HEK293T (cell line): ENCODE measurements at regions of chr1 and their contacts with region 1.

Region 1: GRCh38 chr1:109984456-109985275 is at the start of gene AHCYL1:
- DNase-seq: peak; percentile 100

Region 2: DNA sequence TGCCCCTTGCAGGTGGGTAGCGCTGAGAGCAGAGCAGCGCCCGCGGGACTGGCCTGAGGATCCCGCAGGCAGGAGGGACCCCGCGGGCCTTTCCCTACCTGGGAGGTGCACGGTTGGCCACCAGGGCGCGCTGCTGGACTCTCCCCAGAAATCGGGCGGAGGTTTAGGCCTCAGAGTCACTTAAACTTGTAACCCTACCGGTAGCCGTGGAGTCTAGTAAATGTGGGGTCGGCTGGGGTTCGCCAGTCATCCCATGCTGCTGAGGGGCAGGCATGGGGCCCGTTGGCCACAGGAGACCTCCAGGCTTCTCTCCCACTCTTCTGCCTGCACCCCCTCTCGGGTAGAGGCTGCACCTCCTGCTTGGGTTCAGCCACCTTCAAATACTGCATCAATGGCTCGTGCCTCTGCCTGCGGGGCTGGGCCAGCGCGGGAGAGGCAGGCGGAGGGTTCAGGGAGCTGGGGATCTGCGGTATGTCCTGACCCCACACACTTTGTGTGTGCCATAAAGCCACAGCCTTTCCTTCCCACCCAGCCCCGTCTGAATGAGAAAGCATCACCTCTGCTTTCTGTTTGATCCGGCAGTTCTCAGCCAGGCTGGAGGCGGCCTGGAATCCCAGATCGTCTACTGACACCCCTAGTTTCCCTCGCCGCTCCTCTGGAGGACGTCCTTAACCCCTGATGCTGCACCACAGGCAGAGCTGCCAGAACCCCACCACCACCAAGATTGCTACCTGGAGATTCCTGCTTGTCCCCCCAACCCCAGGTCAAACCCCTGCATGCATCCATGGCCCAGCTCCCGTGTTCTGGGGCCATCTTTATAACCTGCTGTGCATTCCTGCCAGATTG is 341.1 kb before region 1 on chr1:
- CTCF ChIA-PET with region 1: interaction called, 25 read pairs
- POLR2A ChIA-PET with region 1: no interaction called
- DNase-seq: peak; percentile 91

Region 3: DNA sequence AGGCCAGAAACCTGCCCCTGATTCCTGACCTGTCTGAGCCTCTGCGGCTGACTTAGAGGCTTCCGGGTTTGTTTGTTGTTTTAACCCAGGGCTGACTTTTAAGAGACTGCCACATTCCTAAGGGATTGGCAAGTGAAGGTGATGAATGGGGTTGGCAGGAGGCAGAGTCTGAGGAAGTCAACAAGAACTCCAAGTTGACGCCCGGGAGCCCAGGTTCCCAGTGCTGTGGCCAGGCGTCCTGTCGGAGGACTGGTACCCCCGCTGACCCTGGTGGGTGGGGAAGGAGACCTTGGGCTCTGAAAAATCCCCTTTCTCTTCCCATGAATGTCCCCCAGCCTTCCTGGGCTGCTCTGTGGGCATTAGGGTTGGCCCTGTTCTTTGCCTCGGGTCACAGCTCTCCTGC is 201.2 kb before region 1 on chr1:
- CTCF ChIA-PET with region 1: interaction called, 139 read pairs
- POLR2A ChIA-PET with region 1: interaction called, 39 read pairs
- DNase-seq: no peak

Region 4: DNA sequence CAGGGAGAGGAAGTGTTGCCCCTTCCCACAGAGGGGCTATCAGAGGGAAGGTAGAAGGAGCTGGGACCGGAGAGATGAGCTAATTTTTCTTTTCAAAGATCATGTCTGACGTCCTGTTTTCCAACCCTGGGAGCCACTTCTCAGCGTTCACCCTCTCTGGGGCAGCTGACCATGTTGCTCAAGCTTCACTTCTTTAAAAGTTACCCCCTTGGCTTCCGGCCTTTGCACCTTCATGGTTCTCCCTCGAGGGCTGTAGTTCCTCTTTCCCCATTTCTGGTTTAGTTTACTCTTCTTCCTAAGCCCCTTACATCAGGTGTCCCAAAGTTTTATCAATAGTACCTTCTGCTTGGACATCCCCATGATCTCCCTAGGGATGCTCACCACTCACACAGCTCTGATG is 97.8 kb before region 1 on chr1:
- CTCF ChIA-PET with region 1: no interaction called
- POLR2A ChIA-PET with region 1: no interaction called
- DNase-seq: no peak

Region 5: GRCh38 chr1:110005971-110006370 is 21.3 kb after region 1 on chr1:
- CTCF ChIA-PET with region 1: interaction called, 11 read pairs
- POLR2A ChIA-PET with region 1: interaction called, 11 read pairs
- DNase-seq: no peak

Region 6: GRCh38 chr1:110034451-110035235 is 50.0 kb after region 1 on chr1 and contains the start of gene STRIP1:
- CTCF ChIA-PET with region 1: interaction called, 14 read pairs
- POLR2A ChIA-PET with region 1: interaction called, 5 read pairs
- DNase-seq: peak; percentile 96